ENCODE measurements at regions of chr11 and their contacts with region 1.

Region 1: DNA sequence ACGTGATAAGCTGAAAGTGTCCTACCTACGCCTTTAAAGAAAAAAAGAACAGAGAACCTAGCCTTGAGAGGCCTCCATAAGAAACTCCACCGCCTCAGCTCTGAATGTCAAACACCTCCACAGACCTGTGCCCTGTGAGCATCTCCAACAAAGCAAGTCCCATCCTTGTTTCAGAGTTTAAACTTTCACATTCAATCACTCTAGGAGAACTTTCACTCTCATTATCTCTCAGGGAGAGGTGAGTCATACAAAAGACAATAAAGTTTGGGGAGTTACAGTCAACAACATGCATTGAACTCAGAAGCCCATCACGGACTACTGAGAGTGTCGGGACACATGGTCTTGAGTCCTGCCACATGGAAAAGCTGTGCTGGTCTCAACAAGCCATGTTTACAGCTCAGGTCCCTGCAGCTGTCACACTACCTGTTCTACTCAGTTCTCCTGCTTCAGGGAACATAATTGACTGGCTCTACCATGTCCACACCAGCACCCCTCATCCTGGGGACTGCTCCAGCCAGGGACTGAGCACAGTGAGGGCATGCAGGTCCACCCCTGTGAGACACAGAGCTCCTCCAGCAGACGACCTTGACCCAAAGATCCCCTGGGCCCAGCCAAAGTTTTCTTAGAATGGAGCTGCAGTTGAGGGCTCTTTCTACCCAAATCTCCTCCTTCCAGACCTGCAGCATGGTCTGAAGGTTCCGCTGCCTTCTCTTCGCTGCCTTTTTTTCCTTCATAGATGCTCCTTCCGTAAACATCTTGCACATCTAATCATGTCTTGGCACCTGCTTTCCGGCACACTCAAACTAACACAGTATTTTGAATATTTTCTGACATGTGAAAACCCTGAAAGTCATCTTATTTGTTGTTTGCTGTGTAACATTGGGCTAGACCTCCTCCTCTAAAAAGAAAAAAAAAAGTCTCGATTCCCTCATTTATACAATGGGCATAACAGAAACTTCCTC is 114.9 kb downstream of the ETS1 start:
- DNase-seq: peak; percentile 91
- H3K4me3 Mint-ChIP-seq: peak overlapping the region; percentile 85
- H3K27ac Mint-ChIP-seq: peak overlapping the region; percentile 96
- H3K4me1 Mint-ChIP-seq: peaks cover 95% of the 10 kb centered on the region
- H3K27me3 Mint-ChIP-seq: no peaks in the 10 kb centered on the region

Region 2: GRCh38 chr11:128039140-128040021 is 433.0 kb before region 1 on chr11:
- intact Hi-C with region 1: loop called (anchors 5 kb)
- DNase-seq: peak; percentile 94
- H3K4me3 Mint-ChIP-seq: peak overlapping the region; percentile 73
- H3K27ac Mint-ChIP-seq: peak overlapping the region; percentile 94
- H3K4me1 Mint-ChIP-seq: peaks cover 41% of the 10 kb centered on the region
- H3K27me3 Mint-ChIP-seq: no peaks in the 10 kb centered on the region

Region 3: DNA sequence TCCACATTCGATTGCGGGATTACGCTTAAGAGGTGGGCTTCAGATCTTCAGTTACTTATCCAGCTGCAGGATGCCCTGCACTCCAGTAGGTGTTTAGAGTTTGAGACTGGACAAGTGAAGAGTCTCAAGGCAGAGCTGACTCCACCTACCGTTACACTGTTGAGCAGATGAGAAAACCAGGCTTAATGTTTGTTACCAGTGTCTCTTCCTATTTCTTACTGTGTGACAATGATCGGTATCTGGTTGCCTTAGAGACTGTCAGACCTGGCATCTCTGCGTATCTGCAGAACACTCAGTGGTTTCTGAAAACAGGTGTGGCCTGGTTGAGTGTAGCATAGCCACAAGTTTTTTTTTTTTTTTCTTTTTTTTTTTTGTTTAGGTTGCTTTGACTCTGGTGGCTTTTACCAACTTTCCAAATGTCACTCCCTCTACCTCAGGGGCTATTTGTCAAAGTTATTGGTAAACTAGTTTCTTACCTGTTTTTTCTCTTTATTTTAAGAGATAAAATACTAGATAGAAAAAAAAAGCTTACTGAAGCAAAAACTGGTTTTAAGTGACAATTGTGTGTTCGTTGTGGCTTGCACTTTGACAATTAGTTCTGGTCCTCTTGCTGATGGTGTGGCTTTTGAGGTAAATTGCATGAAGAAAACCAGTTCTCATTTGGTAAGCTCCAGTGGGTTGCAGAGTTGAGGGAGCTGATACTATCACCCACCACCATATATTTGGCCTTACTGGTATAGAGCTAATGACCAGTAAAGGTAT is 169.8 kb before region 1 on chr11:
- intact Hi-C with region 1: loop called (anchors 1 kb)
- DNase-seq: peak; percentile 94
- H3K4me3 Mint-ChIP-seq: peak overlapping the region; percentile 81
- H3K27ac Mint-ChIP-seq: peak overlapping the region; percentile 93
- H3K4me1 Mint-ChIP-seq: peaks cover 70% of the 10 kb centered on the region
- H3K27me3 Mint-ChIP-seq: no peaks in the 10 kb centered on the region

Region 4: GRCh38 chr11:128422576-128423370 is 49.6 kb before region 1 on chr11:
- intact Hi-C with region 1: loop called (anchors 2 kb)
- DNase-seq: peak; percentile 89
- H3K4me3 Mint-ChIP-seq: peak overlapping the region; percentile 65
- H3K27ac Mint-ChIP-seq: peak overlapping the region; percentile 96
- H3K4me1 Mint-ChIP-seq: peaks cover 24% of the 10 kb centered on the region
- H3K27me3 Mint-ChIP-seq: no peaks in the 10 kb centered on the region

Region 5: GRCh38 chr11:128497061-128497775 is 24.8 kb after region 1 on chr11:
- intact Hi-C with region 1: loop called (anchors 1 kb)
- DNase-seq: peak; percentile 77
- H3K4me3 Mint-ChIP-seq: peak overlapping the region; percentile 82
- H3K27ac Mint-ChIP-seq: peak overlapping the region; percentile 96
- H3K4me1 Mint-ChIP-seq: peaks cover 92% of the 10 kb centered on the region
- H3K27me3 Mint-ChIP-seq: no peaks in the 10 kb centered on the region

Region 6: DNA sequence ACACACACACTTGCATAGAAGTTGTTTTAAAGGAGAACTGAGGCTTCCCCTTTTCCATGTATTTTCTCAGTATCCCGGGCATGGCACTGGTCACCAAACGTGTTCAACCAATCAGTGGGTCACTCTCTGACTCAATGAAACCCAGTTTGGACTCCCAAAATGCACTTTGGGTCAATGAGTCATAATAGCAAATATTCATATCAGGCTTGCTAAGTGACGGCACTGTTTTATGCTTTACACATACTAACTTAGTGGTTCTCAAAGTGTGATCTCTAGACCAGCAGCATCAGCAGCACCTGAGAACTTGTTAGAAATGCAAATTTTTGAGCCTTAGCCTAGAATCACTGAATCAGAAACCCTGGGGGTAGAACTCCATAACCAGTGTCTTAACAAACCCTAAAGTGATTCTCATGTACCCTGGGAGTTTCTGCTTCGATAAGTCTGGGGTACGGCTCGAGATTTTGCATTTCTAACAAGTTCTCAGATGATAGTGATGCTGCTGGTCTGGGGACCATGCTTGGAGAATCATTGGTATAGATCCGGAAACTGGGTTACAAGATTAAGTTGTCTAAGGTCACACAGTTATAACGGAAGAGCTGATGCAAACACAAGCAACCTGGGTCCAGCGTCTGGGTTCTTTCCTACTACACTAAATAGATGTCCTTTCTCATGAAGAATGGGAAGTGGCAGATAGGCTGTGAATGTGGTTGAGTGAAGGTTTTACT is 79.4 kb after region 1 on chr11:
- intact Hi-C with region 1: loop called (anchors 2 kb)
- DNase-seq: peak; percentile 72
- H3K4me3 Mint-ChIP-seq: peak overlapping the region; percentile 24
- H3K27ac Mint-ChIP-seq: peak overlapping the region; percentile 79
- H3K4me1 Mint-ChIP-seq: peaks cover 57% of the 10 kb centered on the region
- H3K27me3 Mint-ChIP-seq: no peaks in the 10 kb centered on the region

Region 7: GRCh38 chr11:128695539-128696221 is 223.3 kb after region 1 on chr11:
- intact Hi-C with region 1: loop called (anchors 5 kb)
- DNase-seq: peak; percentile 83
- H3K4me3 Mint-ChIP-seq: peak overlapping the region; percentile 93
- H3K27ac Mint-ChIP-seq: peak overlapping the region; percentile 92
- H3K4me1 Mint-ChIP-seq: peaks cover 64% of the 10 kb centered on the region
- H3K27me3 Mint-ChIP-seq: peaks cover 19% of the 10 kb centered on the region

Region 8: DNA sequence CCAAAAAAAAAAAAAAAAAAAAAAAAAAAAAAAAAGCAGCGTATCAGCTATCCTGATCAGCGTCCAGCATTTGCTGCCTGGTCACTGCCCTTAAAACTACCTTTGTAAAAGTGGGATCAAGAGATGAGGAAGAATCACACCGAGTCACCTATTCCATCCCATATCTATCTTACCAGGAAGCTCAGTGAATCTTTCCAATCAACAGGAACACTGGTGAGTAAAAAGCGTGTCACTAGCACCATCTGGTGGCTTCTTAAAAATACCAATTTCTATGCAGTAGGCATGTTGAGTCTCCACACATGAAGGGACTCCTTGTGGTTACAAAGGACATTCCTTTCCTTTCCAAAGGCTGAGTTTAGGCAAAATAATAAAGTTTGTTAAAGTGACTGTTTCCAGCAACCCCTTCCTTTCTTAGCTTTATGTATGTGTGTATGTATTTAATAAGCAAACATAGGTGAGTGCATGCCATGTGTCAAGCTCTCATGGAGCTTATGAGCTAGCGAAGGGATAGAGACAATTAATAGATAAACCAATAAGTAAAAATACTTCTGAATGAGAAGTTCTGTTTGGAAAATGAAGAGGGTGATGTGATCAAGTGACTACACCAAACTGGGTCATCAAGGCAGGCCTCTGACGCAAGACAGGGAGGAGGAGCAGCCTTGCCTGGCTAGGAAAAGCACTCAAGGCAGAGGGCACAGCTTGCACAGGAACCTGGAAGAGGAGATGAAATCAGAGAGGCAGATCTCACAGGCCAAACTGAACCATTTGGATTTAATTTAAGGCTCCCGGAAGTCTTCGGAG is 484.2 kb after region 1 on chr11:
- intact Hi-C with region 1: no loop called
- DNase-seq: peak; percentile 75
- H3K4me3 Mint-ChIP-seq: no peak overlapping the region
- H3K27ac Mint-ChIP-seq: no peak overlapping the region
- H3K4me1 Mint-ChIP-seq: peaks cover 2% of the 10 kb centered on the region
- H3K27me3 Mint-ChIP-seq: peaks cover 18% of the 10 kb centered on the region